ENCODE measurements at regions of chr1 and their contacts with region 1.

Region 1: DNA sequence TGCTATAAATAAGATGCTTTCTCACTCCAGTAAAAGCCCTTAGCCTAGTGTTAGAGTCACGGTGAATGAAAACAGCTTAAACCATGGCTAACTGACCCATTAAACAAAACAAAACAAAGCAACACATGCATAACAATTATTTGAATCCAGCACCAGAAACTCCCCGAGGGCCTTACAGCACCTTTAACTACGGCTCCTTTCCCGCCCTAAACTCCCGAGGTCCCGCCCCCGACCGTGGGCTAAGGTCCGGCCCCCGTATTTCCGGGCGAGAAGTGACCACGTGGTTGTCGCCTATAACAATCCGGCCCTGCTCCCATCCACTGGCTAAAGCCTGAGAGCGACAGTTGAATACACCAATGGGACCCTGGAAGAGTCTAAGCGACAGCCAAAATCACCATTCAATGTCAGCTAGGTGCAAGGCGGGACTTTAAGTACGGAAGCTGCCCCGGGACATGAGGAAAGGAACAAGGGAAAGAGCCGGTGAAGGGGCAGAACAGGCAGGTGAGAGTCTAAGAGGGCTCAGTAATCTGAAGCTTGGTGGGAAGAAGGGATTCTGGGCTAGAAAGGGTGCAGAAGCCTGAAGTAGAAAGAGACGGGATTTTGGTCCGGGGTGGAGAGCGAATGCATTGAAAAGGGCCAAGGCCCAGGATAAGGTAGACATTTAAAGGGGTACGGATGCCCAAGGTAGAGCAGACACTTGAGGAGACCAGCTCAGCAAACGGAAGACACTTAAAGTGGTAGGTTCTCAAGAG is at the start of gene FLAD1:
- H3K4me3 ChIP-seq: peak within 1 kb of the TSS; percentile 70
- H3K27ac ChIP-seq: peak within 1 kb of the TSS; percentile 73
- H3K4me1 ChIP-seq: no peaks in the 10 kb centered on the region
- CTCF ChIP-seq: no peak

Region 2: DNA sequence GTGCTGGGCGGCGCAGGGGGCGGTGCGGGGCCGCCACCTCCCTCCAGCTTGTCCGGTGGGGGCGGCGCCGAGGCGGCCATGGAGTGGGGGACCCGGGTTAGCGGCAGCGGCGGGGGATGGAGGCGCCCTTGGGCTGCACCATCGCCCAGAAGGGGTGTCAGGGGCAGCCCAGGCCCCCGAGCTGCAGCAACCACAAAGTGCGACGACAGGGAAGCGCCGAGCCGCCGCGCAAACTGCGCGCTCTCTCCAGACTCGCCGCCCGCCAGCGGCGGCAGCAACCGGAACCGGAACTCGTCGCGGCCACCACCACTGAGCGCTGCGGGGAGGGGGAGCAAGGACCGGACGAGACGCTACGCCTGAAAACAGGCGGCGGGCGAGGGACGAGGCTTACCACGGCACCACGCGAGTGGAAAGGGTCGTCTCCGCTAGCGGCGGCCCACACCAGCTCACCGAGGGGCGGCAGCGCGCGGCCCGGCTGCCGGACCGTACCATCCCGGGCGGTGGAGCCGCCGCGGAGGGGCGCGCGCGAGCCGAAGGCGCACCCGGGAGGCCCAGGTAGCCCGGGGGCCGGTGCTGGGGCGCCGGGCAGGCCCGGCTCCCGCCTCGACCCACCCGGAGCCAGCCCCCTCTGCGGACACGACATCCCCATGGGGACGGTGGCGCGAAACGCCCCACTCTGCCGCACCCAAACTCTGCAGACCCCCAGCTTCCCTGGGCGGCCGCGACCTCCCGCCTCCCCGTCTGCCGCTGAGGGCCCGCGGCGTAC is 21.4 kb before region 1 on chr1 and contains the start of gene PYGO2:
- CTCF ChIA-PET with region 1: interaction called, 7 read pairs
- POLR2A ChIA-PET with region 1: interaction called, 17 read pairs
- H3K4me3 ChIP-seq: peak within 1 kb of the TSS; percentile 90
- H3K27ac ChIP-seq: peak within 1 kb of the TSS; percentile 94
- H3K4me1 ChIP-seq: peaks cover 8% of the 10 kb centered on the region
- CTCF ChIP-seq: peak; percentile 87; the same call in 1 of the 2 replicates

Region 3: GRCh38 chr1:155455588-155456195 is 472.6 kb after region 1 on chr1:
- CTCF ChIA-PET with region 1: no interaction called
- POLR2A ChIA-PET with region 1: no interaction called
- H3K4me3 ChIP-seq: no peak overlapping the region
- H3K27ac ChIP-seq: no peak overlapping the region
- H3K4me1 ChIP-seq: peaks cover 14% of the 10 kb centered on the region
- CTCF ChIP-seq: no peak